Activated naive CD4-positive, alpha-beta T cell treated with anti-CD3 and anti-CD28 coated beads, Interleukin-2, amount 10 ng/mL, durations not matched to agents 7 days and 5 days (primary cell): ENCODE measurements at regions of chr17 and their contacts with region 1.

Region 1: DNA sequence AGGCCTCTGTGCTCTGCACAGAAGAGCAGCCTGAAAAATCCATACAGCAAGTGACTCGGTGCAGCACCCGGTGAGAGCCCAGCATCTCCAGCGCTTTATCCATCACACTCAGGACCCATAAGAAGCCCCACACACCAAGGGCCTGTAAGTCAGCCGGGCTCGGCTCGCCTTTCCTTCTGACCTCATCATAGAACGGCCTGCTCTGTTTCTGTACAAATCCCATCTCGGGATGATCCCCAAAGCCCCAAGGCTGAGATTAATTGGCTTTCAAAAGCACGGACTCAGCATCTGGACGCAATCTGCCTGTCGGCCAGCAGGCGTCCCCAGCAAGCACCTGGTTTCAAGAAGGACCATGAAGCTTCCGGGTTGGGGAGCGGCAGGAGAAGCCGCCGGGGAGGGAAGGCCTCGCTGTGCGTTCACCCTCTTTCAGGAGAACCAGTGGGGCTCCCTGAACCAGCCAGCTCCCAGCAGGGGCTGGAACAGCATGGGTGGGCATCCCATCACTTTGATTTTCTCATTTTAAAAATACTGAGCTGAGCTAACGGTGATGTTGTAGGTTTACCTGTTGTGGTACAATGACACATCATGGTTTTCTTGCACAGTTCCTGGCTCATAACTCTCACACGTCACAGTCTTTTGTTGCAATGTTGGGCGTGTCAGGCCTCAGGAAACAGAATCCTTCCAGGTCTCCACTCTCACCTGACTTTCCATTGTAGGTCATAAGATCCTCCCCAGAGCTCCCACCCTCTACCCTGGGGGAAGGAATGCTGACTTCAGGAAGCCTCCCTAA is 6.7 kb downstream of the CCDC57 start:
- DNase-seq: peak; percentile 88
- H3K4me3 Mint-ChIP-seq: peak overlapping the region; percentile 2
- H3K27ac Mint-ChIP-seq: peak overlapping the region; percentile 96
- H3K4me1 Mint-ChIP-seq: peaks cover 54% of the 10 kb centered on the region
- H3K27me3 Mint-ChIP-seq: peaks cover 6% of the 10 kb centered on the region

Region 2: GRCh38 chr17:82092094-82092994 is 113.6 kb before region 1 on chr17:
- CTCF ChIA-PET with region 1: no interaction called
- DNase-seq: no peak
- H3K4me3 Mint-ChIP-seq: no peak overlapping the region
- H3K27ac Mint-ChIP-seq: no peak overlapping the region
- H3K4me1 Mint-ChIP-seq: peaks cover 13% of the 10 kb centered on the region
- H3K27me3 Mint-ChIP-seq: no peaks in the 10 kb centered on the region

Region 3: GRCh38 chr17:82230627-82231311 is 24.9 kb after region 1 on chr17:
- CTCF ChIA-PET with region 1: interaction called, 11 read pairs
- DNase-seq: peak; percentile 79
- H3K4me3 Mint-ChIP-seq: peak overlapping the region; percentile 89
- H3K27ac Mint-ChIP-seq: peak overlapping the region; percentile 83
- H3K4me1 Mint-ChIP-seq: peaks cover 29% of the 10 kb centered on the region
- H3K27me3 Mint-ChIP-seq: peaks cover 5% of the 10 kb centered on the region